Heart right ventricle (tissue), 16 donors: ENCODE measurements at regions of chr4 and their contacts with region 1.

Region 1: DNA sequence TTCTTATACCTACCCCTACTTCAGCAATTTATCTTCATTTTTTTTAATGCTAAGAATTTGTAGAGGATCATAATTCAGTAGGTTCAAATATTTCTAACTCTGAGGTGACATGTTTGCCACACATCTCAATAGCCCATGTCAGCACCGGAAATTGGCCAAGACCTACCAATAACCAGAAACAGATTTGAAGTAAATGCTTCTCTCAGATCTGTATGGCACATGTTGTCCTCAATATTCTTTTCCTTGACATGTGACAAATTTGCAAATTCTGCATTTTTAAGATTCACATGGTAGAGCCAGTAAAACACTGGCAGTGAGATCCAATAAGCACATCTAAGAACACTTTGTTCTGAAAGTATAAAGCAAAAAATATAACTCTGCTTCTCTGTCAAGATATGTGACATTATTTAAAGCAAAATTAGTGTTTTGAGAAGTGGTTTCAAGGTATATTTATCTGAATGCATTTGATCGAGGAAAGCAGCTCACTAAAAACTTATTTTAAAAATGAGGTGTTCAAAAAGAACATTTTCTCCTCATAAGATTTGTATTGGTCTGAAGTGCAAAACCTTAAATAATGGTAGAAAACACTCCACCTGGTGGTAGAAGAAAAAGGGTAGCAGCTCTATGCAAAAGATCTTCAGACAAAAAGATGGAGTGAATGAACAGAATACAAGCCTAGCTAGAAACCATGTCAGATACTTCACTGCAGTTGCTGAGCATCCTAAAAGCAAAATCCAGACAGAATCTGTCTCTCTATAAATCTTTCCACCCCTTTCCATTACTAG is 513.8 kb upstream of the FAM241A start:
- DNase-seq: no peak
- ATAC-seq: no peak
- H3K4me3 ChIP-seq: no peak overlapping the region
- H3K27ac ChIP-seq: no peak overlapping the region
- H3K4me1 ChIP-seq: no peaks in the 10 kb centered on the region
- H3K27me3 ChIP-seq: peaks cover 0 to 67% (median 6%) of the 10 kb centered on the region in 7 donors
- CTCF ChIP-seq: peak in 5 of 9 donors; percentile 18 to 41 (median 25)

Region 2: DNA sequence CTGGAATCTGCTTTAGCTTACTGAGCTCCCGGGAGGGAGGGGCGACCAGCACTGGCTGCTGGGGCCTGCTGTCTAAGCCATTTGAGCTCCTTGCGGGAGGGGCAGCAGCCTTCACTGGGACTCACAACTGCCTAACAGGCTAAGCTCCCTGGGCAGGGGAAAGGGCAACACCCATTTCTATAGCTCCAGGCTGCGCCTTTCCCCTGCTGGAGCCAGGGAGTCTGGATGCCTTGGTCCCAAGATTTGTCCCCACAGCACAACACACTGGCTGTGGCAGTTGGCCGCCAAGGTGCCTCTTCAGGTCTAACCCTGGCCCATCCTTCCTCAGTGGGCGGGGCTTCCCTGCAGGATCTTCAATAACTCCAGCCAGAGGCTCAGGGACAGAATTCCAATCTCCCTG is 556.8 kb before region 1 on chr4:
- intact Hi-C with region 1: no loop called
- DNase-seq: no peak
- ATAC-seq: no peak
- H3K4me3 ChIP-seq: no peak overlapping the region
- H3K27ac ChIP-seq: no peak overlapping the region
- H3K4me1 ChIP-seq: no peaks in the 10 kb centered on the region
- H3K27me3 ChIP-seq: no peaks in the 10 kb centered on the region
- CTCF ChIP-seq: no peak

Region 3: DNA sequence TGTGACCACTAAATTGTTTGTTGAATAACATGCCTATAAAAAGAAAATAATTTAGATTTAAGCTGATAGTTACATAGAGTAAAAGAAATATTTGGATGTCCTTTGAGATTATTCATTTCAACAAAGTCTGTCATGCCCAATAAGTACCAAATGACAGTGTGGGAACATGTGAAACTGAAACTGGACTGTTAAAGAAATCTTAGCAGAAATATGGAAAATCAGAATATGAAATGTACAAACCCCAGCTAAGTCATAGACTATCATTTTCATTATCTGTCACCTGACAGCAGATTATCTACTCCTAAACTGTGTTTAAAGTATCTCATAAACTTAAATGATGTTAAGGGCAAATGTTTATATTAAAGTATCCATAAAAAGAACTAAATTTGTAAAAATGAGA is 76.1 kb after region 1 on chr4:
- intact Hi-C with region 1: no loop called
- DNase-seq: no peak
- ATAC-seq: no peak
- H3K4me3 ChIP-seq: no peak overlapping the region
- H3K27ac ChIP-seq: no peak overlapping the region
- H3K4me1 ChIP-seq: no peaks in the 10 kb centered on the region
- H3K27me3 ChIP-seq: no peaks in the 10 kb centered on the region
- CTCF ChIP-seq: no peak

Region 4: GRCh38 chr4:111778543-111778942 is 147.1 kb after region 1 on chr4:
- intact Hi-C with region 1: no loop called
- DNase-seq: no peak
- ATAC-seq: no peak
- H3K4me3 ChIP-seq: no peak overlapping the region
- H3K27ac ChIP-seq: no peak overlapping the region
- H3K4me1 ChIP-seq: no peaks in the 10 kb centered on the region
- H3K27me3 ChIP-seq: peaks cover 0 to 18% (median 0%) of the 10 kb centered on the region in 7 donors
- CTCF ChIP-seq: no peak

Region 5: DNA sequence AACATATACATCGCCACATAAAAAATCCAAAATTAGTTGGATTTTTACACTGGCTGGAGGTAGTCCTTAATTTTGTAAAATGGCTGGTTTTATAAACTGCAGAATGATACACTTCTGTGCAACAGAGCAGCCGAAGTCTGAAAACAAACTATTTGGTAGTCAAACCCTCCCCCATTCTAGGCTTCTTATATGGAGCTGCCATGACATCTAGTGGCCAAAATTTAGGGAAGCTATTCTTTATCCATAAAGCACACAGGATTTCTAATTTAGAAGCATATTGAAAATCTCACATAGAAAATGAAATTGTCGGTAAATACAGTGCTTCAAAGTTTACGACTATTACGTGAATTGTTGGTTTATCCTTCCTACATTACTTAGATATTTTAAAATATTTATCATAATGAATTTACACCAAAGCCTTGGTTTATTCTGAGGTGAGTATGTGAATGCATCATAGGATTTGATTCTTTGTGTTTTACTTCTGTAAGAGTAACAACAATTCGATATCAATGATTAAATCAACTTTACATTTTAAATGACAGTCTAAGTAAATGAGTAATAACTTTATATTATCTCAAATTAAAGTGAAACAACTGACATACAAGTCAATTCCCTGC is 400.4 kb after region 1 on chr4:
- intact Hi-C with region 1: loop called in 1 of 10 experiments (anchors 10 kb)
- DNase-seq: peak in 1 of 2 donors; percentile 7
- ATAC-seq: no peak
- H3K4me3 ChIP-seq: no peak overlapping the region
- H3K27ac ChIP-seq: no peak overlapping the region
- H3K4me1 ChIP-seq: no peaks in the 10 kb centered on the region
- H3K27me3 ChIP-seq: peaks cover 0 to 51% (median 41%) of the 10 kb centered on the region in 7 donors
- CTCF ChIP-seq: peak in 7 of 9 donors; percentile 43 to 68 (median 63)